HCT116 (cell line): ENCODE measurements at regions of chr12 and their contacts with region 1.

Region 1: DNA sequence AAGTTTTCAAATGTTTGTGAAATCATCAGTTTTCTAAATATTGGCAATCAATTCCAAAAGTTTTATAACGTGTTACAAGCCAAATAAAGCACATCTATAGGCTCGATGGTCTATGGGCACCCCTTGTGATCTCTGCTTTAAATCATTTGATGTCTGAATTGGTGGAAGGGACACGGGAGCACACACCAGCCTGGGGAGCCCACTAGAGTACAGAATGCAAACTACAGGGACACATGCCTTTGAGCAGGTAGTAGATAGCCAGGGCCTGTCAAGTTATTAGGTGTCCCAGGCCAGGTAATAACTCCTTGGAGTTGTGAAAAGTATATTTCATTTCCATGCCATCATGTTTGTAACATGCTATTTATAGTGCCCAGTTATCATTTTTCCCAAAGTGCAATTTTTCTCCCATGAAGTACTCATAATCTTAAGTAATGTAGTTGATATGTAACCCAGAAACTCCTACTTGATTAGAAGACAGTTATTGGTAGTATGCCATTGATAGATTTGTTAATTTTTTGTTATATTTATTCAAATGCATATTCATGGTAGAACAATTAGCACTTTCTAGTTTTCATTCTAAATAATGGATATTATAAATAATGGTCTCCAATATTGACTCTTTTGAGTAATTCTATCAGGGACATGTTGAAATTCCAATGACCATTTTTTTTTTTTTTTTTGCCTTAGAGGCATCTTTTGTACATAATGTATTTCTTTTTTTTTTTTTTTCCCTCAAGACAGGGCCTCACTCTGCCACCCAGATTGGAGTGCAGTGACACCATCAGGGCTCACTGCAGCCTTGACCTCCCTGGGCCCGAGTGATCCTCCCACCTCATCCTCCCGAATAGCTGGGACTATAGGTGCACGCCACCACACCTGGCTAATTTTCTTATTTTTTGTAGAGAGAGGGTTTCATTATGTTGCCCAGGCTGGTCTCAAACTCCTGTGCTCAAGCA is 96.9 kb upstream of the FGD4 start:
- DNase-seq: peak; percentile 45
- ATAC-seq: peak; percentile 98
- H3K4me3 ChIP-seq: no peak overlapping the region
- H3K27ac ChIP-seq: no peak overlapping the region
- H3K4me1 ChIP-seq: no peaks in the 10 kb centered on the region
- H3K27me3 ChIP-seq: no peaks in the 10 kb centered on the region
- CTCF ChIP-seq: peak; percentile 76 to 85 (median 77); a peak in 5 of 6 replicates
- POLR2A ChIP-seq: no peak
- RAD21 ChIP-seq: peak; percentile 90

Region 2: DNA sequence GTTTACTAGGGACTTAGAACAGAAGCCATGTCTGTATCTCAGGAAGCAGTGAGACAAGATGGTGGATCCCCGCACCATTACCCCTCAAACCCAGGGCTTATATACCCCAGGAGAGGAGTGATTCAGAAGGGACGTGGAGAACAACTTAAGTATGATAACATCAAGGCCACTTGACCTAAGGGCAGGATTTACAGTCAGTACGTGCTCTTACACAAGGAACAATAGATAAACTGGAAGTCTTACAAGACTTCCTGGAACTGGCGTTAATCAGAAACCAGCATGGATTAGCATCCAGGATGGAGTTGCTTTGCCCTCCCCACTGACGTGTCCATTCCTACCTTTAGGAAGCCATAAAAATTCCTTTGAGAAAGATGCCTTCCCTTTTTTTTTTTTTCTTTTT is 651.6 kb before region 1 on chr12:
- CTCF ChIA-PET with region 1: interaction called, 3 read pairs
- POLR2A ChIA-PET with region 1: interaction called, 3 read pairs
- RAD21 ChIA-PET with region 1: interaction called in 1 of 2 experiments, 3 read pairs
- intact Hi-C with region 1: loop called (anchors 2 kb)
- DNase-seq: no peak
- ATAC-seq: no peak
- H3K4me3 ChIP-seq: no peak overlapping the region
- H3K27ac ChIP-seq: no peak overlapping the region
- H3K4me1 ChIP-seq: peaks cover 0 to 8% of the 10 kb centered on the region in 2 experiments; a peak in 2 of 4 replicates
- H3K27me3 ChIP-seq: no peaks in the 10 kb centered on the region
- CTCF ChIP-seq: no peak
- POLR2A ChIP-seq: no peak
- RAD21 ChIP-seq: no peak

Region 3: DNA sequence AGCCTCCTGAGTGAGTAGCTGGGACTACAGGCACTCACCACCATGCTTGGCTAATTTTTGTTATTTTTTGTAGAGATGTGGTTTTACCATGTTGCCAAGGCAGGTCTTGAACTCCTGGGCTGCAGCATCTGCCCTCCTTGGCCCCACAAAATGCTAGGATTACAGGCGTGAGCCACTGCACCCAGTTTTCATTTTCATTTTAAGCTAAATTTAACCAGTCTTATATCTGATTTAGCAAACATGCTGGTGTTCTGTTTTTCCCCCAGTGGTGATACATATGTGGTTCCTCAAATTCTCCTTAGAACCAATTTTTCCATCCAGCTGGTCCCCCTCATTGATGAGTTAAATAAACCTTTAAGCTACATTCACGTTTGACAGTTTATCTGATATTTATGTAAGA is 239.6 kb before region 1 on chr12:
- CTCF ChIA-PET with region 1: interaction called, 3 read pairs
- POLR2A ChIA-PET with region 1: interaction called, 3 read pairs
- RAD21 ChIA-PET with region 1: no interaction called
- intact Hi-C with region 1: loop called (anchors 1 kb)
- DNase-seq: no peak
- ATAC-seq: no peak
- H3K4me3 ChIP-seq: no peak overlapping the region
- H3K27ac ChIP-seq: no peak overlapping the region
- H3K4me1 ChIP-seq: no peaks in the 10 kb centered on the region
- H3K27me3 ChIP-seq: no peaks in the 10 kb centered on the region
- CTCF ChIP-seq: no peak
- POLR2A ChIP-seq: no peak
- RAD21 ChIP-seq: no peak